ENCODE measurements at regions of chr5 and their contacts with region 1.

Region 1: DNA sequence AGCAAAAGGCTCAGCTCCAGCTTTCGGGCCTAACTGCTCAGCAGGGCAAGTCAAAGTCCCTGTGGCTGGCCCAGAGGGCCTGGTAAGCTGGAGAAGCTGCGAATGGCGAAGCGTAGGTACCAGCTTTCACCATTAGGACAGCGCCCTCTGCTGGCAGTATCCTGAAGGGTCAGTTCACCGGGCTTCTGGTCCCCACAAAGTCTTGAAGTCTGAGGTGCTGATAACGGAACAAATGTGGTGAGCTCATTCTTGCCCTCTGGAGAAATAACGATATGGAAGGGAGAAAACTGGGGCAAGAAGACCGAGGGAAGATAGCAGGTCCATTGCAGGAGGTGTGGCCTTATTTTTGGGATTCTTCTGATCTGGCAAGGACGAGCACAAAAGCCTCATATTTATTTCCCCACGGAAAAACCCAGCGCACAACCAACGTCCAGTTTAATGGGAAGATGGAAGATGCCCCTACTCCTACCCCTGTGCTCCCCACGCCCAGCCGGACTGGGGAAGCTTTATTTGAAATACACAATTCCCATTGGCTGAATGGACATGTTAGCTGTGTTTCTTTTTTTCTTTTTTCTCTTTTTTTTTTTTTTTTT is 7.2 kb downstream of the SOWAHA start:
- DNase-seq: no peak
- H3K4me3 ChIP-seq: no peak overlapping the region
- H3K27me3 ChIP-seq: no peaks in the 10 kb centered on the region
- CTCF ChIP-seq: peak; percentile 87

Region 2: GRCh38 chr5:132526290-132526973 is 293.8 kb before region 1 on chr5:
- CTCF ChIA-PET with region 1: interaction called, 16 read pairs
- POLR2A ChIA-PET with region 1: no interaction called
- DNase-seq: no peak
- H3K4me3 ChIP-seq: no peak overlapping the region
- H3K27me3 ChIP-seq: peaks cover under 1% of the 10 kb centered on the region
- CTCF ChIP-seq: peak; percentile 85

Region 3: GRCh38 chr5:132767150-132767549 is 53.1 kb before region 1 on chr5:
- CTCF ChIA-PET with region 1: interaction called, 24 read pairs
- POLR2A ChIA-PET with region 1: no interaction called
- DNase-seq: no peak
- H3K4me3 ChIP-seq: no peak overlapping the region
- H3K27me3 ChIP-seq: no peaks in the 10 kb centered on the region
- CTCF ChIP-seq: no peak

Region 4: GRCh38 chr5:132807163-132807838 is 13.0 kb before region 1 on chr5:
- CTCF ChIA-PET with region 1: interaction called, 23 read pairs
- POLR2A ChIA-PET with region 1: no interaction called
- DNase-seq: no peak
- H3K4me3 ChIP-seq: no peak overlapping the region
- H3K27me3 ChIP-seq: peaks cover 16% of the 10 kb centered on the region
- CTCF ChIP-seq: peak; percentile 16; the same call in 1 of the 2 replicates

Region 5: DNA sequence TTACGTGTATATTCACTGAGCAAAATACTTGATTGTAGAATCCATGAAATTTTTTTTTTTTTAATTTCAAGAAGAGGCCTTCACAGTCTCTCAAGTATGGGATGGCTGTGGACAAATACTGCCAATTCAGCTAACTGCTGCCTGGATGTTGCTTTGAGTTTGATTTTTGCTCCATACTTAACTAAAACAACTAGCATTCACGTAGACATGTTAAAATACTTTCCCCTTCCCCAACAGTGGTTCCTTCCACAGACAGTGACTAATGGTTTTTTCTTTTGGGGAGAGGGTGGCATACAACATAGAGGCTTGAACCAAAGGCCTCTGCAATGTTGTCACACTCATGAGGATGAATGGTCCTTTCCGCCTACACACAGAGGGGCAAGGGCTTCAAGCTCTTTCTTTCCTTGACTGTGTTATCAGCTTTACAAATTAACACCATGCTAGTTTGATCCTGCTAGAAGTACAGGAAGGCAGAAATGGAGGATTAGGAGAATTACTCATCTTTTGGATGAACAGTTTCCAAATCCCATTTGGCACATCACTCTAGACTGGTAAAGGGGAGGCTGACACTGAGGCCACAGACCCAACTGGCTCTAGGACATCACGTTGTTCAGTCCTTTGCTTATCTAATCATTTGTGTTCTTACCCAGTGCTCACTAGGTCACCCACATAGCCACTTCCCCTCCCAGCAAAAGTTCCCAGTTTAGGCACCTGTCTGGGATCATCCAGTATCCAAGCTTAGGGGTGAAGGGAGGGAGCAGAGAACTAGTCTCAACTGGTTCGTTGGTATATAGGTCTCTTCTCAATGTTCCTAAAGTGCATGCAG is 51.4 kb after region 1 on chr5:
- CTCF ChIA-PET with region 1: interaction called, 12 read pairs
- POLR2A ChIA-PET with region 1: no interaction called
- DNase-seq: no peak
- H3K4me3 ChIP-seq: no peak overlapping the region
- H3K27me3 ChIP-seq: no peaks in the 10 kb centered on the region; the same call in 1 of the 2 replicates
- CTCF ChIP-seq: no peak